Naive thymus-derived CD4-positive, alpha-beta T cell (primary cell): ENCODE measurements at regions of chr1 and their contacts with region 1.

Region 1: DNA sequence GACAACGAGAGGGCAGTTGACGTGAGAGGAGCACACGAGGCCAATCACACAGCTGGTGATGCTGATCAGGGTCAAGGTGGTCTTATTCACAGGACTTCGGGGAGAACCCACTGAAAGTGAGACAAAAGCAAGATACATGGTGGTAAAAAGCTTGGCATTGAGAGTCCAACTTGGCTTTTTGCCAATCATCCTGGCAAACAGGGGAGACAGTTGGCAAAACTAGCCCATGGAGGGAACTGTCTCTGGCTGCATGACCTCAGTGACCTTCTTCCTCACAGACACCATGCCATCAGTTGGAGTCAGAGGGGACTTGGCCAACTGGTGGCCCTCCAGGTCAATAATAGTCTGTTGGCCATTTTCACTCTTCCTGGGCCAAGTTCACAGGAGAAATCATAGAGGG is 139.9 kb downstream of the ASTN1 start:
- DNase-seq: no peak
- ATAC-seq: no peak
- H3K4me3 ChIP-seq: no peak overlapping the region
- H3K4me3 Mint-ChIP-seq: no peak overlapping the region
- H3K27ac ChIP-seq: no peak overlapping the region
- H3K27ac Mint-ChIP-seq: no peak overlapping the region
- H3K4me1 ChIP-seq: no peaks in the 10 kb centered on the region
- H3K4me1 Mint-ChIP-seq: no peaks in the 10 kb centered on the region
- H3K27me3 ChIP-seq: no peaks in the 10 kb centered on the region
- H3K27me3 Mint-ChIP-seq: peaks cover 0 to 5% (median 0%) of the 10 kb centered on the region in 5 donors

Region 2: DNA sequence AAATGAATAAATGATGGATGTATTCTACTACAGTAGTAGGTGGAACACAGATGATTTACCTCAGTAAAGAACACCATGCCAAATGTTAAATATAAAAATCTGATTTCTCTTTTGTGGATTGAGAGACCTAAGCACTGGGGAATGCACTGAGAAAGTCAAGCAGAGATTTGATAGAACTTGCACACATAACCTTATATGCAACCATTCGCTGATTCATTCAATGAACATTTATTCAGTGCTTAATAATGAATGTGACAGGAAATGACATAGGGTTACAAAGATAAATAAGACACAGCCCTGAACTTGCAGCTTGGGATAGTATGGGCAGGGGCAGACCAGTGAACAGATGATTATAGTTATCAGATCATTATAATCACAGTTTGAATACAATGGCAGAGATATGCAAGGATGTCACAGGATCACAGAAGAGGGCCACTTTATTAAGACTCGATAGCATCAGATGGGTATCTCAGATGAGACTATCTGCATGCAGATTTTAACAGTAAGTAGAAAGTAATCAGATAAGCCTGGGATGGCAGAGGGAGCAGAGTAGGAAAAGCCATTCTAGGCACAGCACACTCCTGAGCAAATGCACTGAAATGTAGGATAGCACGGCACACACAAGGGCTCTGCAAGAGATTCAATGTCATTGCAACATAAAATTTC is 29.6 kb before region 1 on chr1:
- CTCF ChIA-PET with region 1: no interaction called
- POLR2A ChIA-PET with region 1: no interaction called
- intact Hi-C with region 1: loop called in 1 of 2 experiments (anchors 1 kb)
- DNase-seq: no peak
- ATAC-seq: no peak
- H3K4me3 ChIP-seq: no peak overlapping the region
- H3K4me3 Mint-ChIP-seq: no peak overlapping the region
- H3K27ac ChIP-seq: no peak overlapping the region
- H3K27ac Mint-ChIP-seq: no peak overlapping the region
- H3K4me1 ChIP-seq: no peaks in the 10 kb centered on the region
- H3K4me1 Mint-ChIP-seq: no peaks in the 10 kb centered on the region
- H3K27me3 ChIP-seq: no peaks in the 10 kb centered on the region
- H3K27me3 Mint-ChIP-seq: peaks cover 0 to 8% (median 0%) of the 10 kb centered on the region in 5 donors

Region 3: GRCh38 chr1:177065430-177065829 is 40.8 kb after region 1 on chr1:
- CTCF ChIA-PET with region 1: no interaction called
- POLR2A ChIA-PET with region 1: no interaction called
- intact Hi-C with region 1: no loop called
- DNase-seq: no peak
- ATAC-seq: no peak
- H3K4me3 ChIP-seq: no peak overlapping the region
- H3K4me3 Mint-ChIP-seq: no peak overlapping the region
- H3K27ac ChIP-seq: no peak overlapping the region
- H3K27ac Mint-ChIP-seq: no peak overlapping the region
- H3K4me1 ChIP-seq: no peaks in the 10 kb centered on the region
- H3K4me1 Mint-ChIP-seq: no peaks in the 10 kb centered on the region
- H3K27me3 ChIP-seq: no peaks in the 10 kb centered on the region
- H3K27me3 Mint-ChIP-seq: peaks cover 0 to 4% (median 0%) of the 10 kb centered on the region in 5 donors